ENCODE measurements at regions of chr2 and their contacts with region 1.

Region 1: DNA sequence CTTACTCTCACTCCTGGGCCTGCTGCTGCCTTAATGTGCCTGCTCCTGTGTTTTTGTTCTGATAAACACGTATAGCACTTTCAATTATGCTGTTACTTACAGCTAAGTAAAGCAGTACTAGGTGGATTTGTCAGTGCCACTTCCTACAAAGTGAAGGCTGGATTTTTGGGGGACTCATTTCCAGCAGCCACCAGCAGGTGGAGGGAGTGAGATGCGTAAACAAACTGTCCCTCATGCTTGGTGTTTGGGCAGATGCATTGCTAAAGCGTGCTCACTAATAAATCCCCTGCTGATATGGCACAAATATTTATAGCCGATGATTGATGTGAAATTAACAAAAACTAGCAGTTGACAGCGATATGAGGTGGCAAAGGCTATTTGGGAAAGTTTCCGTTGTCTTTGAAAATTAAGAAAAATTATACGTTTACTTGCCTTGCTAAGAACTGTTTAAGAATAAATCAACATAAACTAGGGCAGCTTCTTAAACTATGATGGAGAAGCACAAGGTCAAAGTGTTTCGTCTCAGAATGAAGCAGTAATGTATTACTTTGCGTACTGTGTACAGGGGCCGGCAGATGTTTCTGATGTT is 101.7 kb downstream of the AGAP1 start:
- DNase-seq: no peak
- H3K4me3 ChIP-seq: no peak overlapping the region
- H3K27ac ChIP-seq: peak overlapping the region; percentile 13
- H3K4me1 ChIP-seq: peaks cover 14% of the 10 kb centered on the region
- H3K27me3 ChIP-seq: no peaks in the 10 kb centered on the region
- CTCF ChIP-seq: peak; percentile 86 to 94 (median 88)
- POLR2A ChIP-seq: no peak

Region 2: GRCh38 chr2:235135990-235136561 is 459.4 kb before region 1 on chr2:
- intact Hi-C with region 1: loop called (anchors 5 kb)
- DNase-seq: peak in 1 of 2 donors; percentile 82
- H3K4me3 ChIP-seq: no peak overlapping the region
- H3K27ac ChIP-seq: no peak overlapping the region
- H3K4me1 ChIP-seq: no peaks in the 10 kb centered on the region
- H3K27me3 ChIP-seq: no peaks in the 10 kb centered on the region
- CTCF ChIP-seq: peak in 2 of 3 experiments; percentile 42 to 55
- POLR2A ChIP-seq: no peak

Region 3: GRCh38 chr2:235669983-235670962 is 74.8 kb after region 1 on chr2:
- intact Hi-C with region 1: loop called (anchors 5 kb)
- DNase-seq: no peak
- H3K4me3 ChIP-seq: peak overlapping the region; percentile 47 to 52
- H3K27ac ChIP-seq: peak overlapping the region; percentile 48
- H3K4me1 ChIP-seq: peaks cover 31% of the 10 kb centered on the region
- H3K27me3 ChIP-seq: no peaks in the 10 kb centered on the region
- CTCF ChIP-seq: no peak
- POLR2A ChIP-seq: no peak

Region 4: GRCh38 chr2:235746257-235747084 is 151.0 kb after region 1 on chr2:
- intact Hi-C with region 1: loop called (anchors 2 kb)
- DNase-seq: no peak
- H3K4me3 ChIP-seq: no peak overlapping the region
- H3K27ac ChIP-seq: no peak overlapping the region
- H3K4me1 ChIP-seq: peaks cover 17% of the 10 kb centered on the region
- H3K27me3 ChIP-seq: no peaks in the 10 kb centered on the region
- CTCF ChIP-seq: peak; percentile 8 to 74 (median 69)
- POLR2A ChIP-seq: no peak